Stomach (tissue), 19 donors: ENCODE measurements at regions of chr15 and their contacts with region 1.

Region 1: GRCh38 chr15:92808978-92809879 is 90.9 kb upstream of the CHD2 start:
- DNase-seq: peak; percentile 99
- H3K4me3 ChIP-seq: peak overlapping the region; percentile 46 to 60 (median 57)
- H3K27ac ChIP-seq: peak overlapping the region; percentile 93 to 99 (median 96)
- H3K4me1 ChIP-seq: peaks cover 24 to 55% (median 41%) of the 10 kb centered on the region in 4 donors
- H3K27me3 ChIP-seq: no peaks in the 10 kb centered on the region
- CTCF ChIP-seq: peak in 5 of 7 experiments; percentile 72 to 99 (median 98)
- EP300 ChIP-seq: peak; percentile 8
- POLR2A ChIP-seq: peak in 1 of 4 donors; percentile 25

Region 2: DNA sequence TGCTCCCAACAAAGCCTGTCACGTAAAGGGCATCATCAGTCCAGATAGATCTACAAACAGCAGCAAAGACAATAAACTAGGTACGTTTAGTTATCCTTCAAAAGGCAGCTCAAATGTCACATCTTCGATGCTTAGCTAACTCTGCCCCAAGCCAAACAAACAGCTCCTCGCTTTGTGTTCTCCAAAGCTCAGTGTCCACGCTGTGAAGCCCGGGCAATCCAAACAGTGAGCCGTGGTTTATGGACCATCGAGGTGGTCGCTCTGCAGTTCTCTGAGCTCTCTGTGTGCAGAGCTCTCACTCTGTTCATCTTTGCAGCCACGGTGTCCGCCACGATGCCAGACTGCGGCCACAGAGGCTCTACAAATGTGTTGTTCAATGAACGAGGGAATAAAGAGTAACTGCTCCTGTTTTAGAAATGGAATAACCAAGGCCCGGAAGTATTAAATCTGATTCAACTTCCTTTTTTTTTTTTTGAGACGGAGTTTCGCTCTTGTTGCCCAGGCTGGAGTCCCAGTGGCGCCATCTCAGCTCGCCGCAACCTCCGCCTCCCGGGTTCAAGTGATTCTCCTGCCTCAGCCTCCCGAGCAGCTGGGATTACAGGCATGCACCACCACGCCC is 36.5 kb before region 1 on chr15:
- intact Hi-C with region 1: no loop called
- DNase-seq: no peak
- H3K4me3 ChIP-seq: no peak overlapping the region
- H3K27ac ChIP-seq: no peak overlapping the region
- H3K4me1 ChIP-seq: no peaks in the 10 kb centered on the region
- H3K27me3 ChIP-seq: no peaks in the 10 kb centered on the region
- CTCF ChIP-seq: no peak
- EP300 ChIP-seq: no peak
- POLR2A ChIP-seq: no peak

Region 3: DNA sequence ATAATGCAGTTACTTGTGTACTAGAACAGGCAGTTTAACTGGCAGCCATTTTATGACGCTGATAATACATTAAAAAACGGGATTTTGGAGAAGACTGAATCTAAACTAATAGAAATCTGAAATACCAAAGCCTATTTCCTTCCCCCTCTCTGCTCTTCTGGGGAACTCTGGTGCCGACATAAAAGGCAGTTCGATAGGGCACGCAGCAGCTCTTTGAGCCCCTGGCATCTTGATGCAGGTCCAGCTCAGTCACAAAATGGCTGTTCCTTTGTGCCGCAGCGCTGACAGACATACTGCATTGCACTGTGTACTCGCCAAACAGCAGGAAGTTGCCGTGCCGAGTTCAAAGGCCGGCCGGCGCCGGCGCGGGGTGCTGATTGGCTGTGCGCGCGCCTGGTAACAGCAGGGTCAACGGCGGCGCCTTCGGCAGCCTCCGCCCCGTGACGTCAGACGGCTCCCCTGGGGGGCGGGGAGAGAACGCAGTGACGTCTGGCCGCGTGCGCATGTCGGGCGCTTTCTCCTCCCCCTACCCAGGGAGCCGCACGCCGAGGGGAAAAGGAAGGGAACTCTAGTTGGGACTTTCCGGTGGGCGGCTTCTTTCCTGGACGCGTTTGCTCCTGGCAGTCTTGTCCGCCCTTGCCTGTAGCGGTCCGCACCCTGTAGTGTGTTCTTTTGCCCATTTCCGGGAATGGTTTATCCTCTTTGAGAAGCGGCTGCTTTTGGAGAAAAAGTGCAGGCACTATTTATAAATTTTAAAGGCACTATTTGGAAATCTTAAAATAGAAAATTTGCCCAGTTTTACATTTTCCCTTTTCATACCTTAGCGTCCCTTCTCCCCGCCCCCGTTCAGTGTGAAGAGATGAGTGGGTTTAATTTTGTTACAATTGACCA is 95.0 kb after region 1 on chr15:
- intact Hi-C with region 1: no loop called
- DNase-seq: peak; percentile 99 to 100
- H3K4me3 ChIP-seq: peak overlapping the region; percentile 55 to 66 (median 62)
- H3K27ac ChIP-seq: peak overlapping the region; percentile 96 to 99 (median 97)
- H3K4me1 ChIP-seq: peaks cover 26 to 64% (median 52%) of the 10 kb centered on the region in 4 donors
- H3K27me3 ChIP-seq: no peaks in the 10 kb centered on the region
- CTCF ChIP-seq: peak in 1 of 7 experiments; percentile 8
- EP300 ChIP-seq: peak; percentile 91
- POLR2A ChIP-seq: peak in 2 of 4 donors; percentile 47 to 86

Region 4: GRCh38 chr15:92921215-92922131 is 112.2 kb after region 1 on chr15:
- intact Hi-C with region 1: loop called (anchors 10 kb)
- DNase-seq: peak in 1 of 2 donors; percentile 79
- H3K4me3 ChIP-seq: peak overlapping the region in 1 of 4 donors; percentile 9
- H3K27ac ChIP-seq: peak overlapping the region; percentile 78 to 99 (median 83)
- H3K4me1 ChIP-seq: peaks cover 50 to 99% (median 86%) of the 10 kb centered on the region in 4 donors
- H3K27me3 ChIP-seq: no peaks in the 10 kb centered on the region
- CTCF ChIP-seq: no peak
- EP300 ChIP-seq: no peak
- POLR2A ChIP-seq: no peak